ENCODE measurements at regions of chr3 and their contacts with region 1.

Region 1: GRCh38 chr3:183122257-183122932 is 23.1 kb upstream of the MCCC1 start:
- DNase-seq: peak; percentile 9 to 51
- H3K4me3 ChIP-seq: no peak overlapping the region
- H3K27ac ChIP-seq: no peak overlapping the region
- H3K4me1 ChIP-seq: peaks cover 17% of the 10 kb centered on the region
- H3K27me3 ChIP-seq: no peaks in the 10 kb centered on the region
- CTCF ChIP-seq: peak; percentile 99

Region 2: DNA sequence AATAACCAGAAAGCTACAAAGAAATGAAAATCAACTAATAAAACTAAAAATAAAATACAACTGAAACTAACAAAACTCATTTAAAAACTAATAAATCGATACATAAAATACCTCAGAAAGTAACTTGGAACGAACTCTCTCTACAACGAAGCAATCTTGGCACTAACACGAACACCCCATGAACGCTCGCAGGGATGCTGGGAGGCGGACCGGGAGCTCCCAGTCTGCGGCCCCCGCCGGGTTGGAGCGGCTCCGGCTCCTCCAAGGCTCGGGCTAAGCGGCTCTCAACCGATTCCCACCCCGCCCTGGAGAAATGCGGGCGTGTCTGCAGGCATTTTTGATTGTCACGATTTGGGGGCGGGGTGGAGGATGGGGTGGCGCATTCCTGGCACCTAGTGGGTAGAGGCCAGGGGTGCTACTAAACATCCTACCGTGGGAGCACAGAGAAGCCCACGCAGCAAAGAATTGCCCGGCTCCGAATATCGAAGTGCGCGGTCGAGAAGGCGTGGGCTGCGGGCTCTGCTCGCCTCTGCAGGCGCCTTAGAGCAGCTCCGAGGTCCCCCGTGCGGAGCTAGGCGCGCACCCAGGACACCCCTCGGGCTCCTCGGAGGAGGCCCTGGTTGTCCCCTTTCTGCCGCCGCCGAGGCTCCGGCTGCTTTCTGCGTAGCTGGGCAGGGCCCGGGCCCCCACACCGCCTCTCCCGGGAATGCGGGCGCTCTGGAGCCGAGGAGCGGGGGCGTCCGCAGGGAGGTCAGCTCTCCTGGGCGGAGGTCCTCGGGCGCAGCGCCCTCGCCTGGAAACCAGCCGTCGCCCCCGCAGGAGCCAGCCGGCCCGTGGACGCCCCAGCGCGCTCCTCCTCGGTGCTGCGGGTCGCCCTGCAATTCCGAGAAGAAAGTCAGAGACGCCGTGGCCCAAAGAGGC is 56.5 kb after region 1 on chr3:
- CTCF ChIA-PET with region 1: interaction called, 3 read pairs
- POLR2A ChIA-PET with region 1: no interaction called
- intact Hi-C with region 1: loop called (anchors 1 kb)
- DNase-seq: peak; percentile 52 to 73
- H3K4me3 ChIP-seq: peak overlapping the region; percentile 71
- H3K27ac ChIP-seq: no peak overlapping the region
- H3K4me1 ChIP-seq: no peaks in the 10 kb centered on the region; the same call in 1 of the 2 replicates
- H3K27me3 ChIP-seq: no peaks in the 10 kb centered on the region
- CTCF ChIP-seq: peak; percentile 52; the same call in 1 of the 2 replicates

Region 3: GRCh38 chr3:183370391-183370790 is 248.0 kb after region 1 on chr3:
- CTCF ChIA-PET with region 1: no interaction called
- POLR2A ChIA-PET with region 1: interaction called, 14 read pairs
- intact Hi-C with region 1: no loop called
- DNase-seq: peak in 1 of 2 experiments; percentile 40
- H3K4me3 ChIP-seq: no peak overlapping the region
- H3K27ac ChIP-seq: peak overlapping the region; percentile 97
- H3K4me1 ChIP-seq: peaks cover 48% of the 10 kb centered on the region
- H3K27me3 ChIP-seq: no peaks in the 10 kb centered on the region
- CTCF ChIP-seq: no peak

Region 4: DNA sequence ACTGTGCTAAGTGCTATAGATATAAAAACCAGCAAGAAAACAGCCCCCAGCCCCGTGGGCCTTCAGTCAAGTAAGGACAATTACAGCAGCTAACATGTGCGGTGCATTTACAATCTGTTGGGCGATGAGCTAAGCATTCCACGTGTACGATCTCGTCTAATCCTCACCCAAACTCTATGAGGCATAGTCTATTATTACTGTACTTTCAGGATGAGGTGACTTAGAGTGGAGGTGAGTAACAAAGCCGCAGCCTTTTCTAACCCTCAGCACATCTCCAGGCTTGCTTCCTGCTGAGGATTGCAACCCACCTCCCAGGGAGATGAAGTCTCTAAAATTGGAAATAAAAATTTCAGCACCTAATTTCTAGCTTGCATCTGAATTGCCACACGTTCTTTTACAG is 359.2 kb after region 1 on chr3:
- CTCF ChIA-PET with region 1: interaction called, 11 read pairs
- POLR2A ChIA-PET with region 1: no interaction called
- intact Hi-C with region 1: no loop called
- DNase-seq: no peak
- H3K4me3 ChIP-seq: no peak overlapping the region
- H3K27ac ChIP-seq: no peak overlapping the region
- H3K4me1 ChIP-seq: peaks cover 24% of the 10 kb centered on the region
- H3K27me3 ChIP-seq: no peaks in the 10 kb centered on the region
- CTCF ChIP-seq: no peak

Region 5: GRCh38 chr3:183884427-183885296 is 762.3 kb after region 1 on chr3 and contains the start of gene PARL:
- CTCF ChIA-PET with region 1: no interaction called
- POLR2A ChIA-PET with region 1: no interaction called
- intact Hi-C with region 1: loop called (anchors 10 kb)
- DNase-seq: peak; percentile 86 to 98
- H3K4me3 ChIP-seq: peak within 1 kb of the TSS; percentile 96
- H3K27ac ChIP-seq: peak within 1 kb of the TSS; percentile 33
- H3K4me1 ChIP-seq: peaks cover 15% of the 10 kb centered on the region
- H3K27me3 ChIP-seq: no peaks in the 10 kb centered on the region
- CTCF ChIP-seq: peak; percentile 97
- total RNA-seq, gene PARL: 109 and 180 TPM in 2 replicates